Mammary epithelial cell (primary cell): ENCODE measurements at regions of chr2 and their contacts with region 1.

Region 1: GRCh38 chr2:65382776-65383357 is 49.5 kb downstream of the SPRED2 start:
- DNase-seq: peak; percentile 99
- H3K4me3 ChIP-seq: no peak overlapping the region
- H3K27ac ChIP-seq: peak overlapping the region; percentile 85
- H3K4me1 ChIP-seq: peaks cover 84% of the 10 kb centered on the region
- H3K27me3 ChIP-seq: no peaks in the 10 kb centered on the region
- CTCF ChIP-seq: peak; percentile 32 to 63

Region 2: GRCh38 chr2:65320042-65320725 is 62.7 kb before region 1 on chr2:
- CTCF ChIA-PET with region 1: no interaction called
- dilution Hi-C with region 1: no loop called
- in situ Hi-C with region 1: no loop called
- intact Hi-C with region 1: loop called (anchors 1 kb)
- DNase-seq: peak; percentile 94
- H3K4me3 ChIP-seq: no peak overlapping the region
- H3K27ac ChIP-seq: peak overlapping the region; percentile 77
- H3K4me1 ChIP-seq: peaks cover 58% of the 10 kb centered on the region
- H3K27me3 ChIP-seq: no peaks in the 10 kb centered on the region
- CTCF ChIP-seq: peak; percentile 45 to 54

Region 3: GRCh38 chr2:65366595-65367125 is 16.2 kb before region 1 on chr2:
- CTCF ChIA-PET with region 1: interaction called, 3 read pairs
- dilution Hi-C with region 1: no loop called
- in situ Hi-C with region 1: no loop called
- intact Hi-C with region 1: loop called (anchors 1 kb)
- DNase-seq: peak; percentile 98
- H3K4me3 ChIP-seq: peak overlapping the region; percentile 28 to 51 (median 30)
- H3K27ac ChIP-seq: peak overlapping the region; percentile 92
- H3K4me1 ChIP-seq: peaks cover 49% of the 10 kb centered on the region
- H3K27me3 ChIP-seq: no peaks in the 10 kb centered on the region
- CTCF ChIP-seq: no peak

Region 4: DNA sequence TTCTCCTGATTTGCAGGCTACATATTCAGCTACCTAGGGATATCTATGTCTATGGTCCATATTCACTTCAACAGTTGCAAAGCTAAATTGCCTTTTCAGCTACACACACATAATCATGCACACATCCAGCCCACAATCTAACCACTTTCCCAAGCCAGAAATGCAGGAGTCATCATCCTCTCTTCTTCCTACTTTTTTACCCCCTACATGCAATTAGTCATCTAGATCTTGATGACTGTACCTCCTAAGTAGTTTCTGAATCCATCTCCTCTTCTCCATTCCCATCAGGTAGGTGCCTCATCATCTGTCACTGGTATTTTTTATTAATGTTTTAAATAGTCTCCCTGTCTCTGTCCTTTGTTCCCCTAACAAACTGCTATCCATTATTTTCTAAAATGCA is 73.2 kb after region 1 on chr2:
- CTCF ChIA-PET with region 1: no interaction called
- dilution Hi-C with region 1: no loop called
- in situ Hi-C with region 1: no loop called
- intact Hi-C with region 1: no loop called
- DNase-seq: peak; percentile 92
- H3K4me3 ChIP-seq: no peak overlapping the region
- H3K27ac ChIP-seq: no peak overlapping the region
- H3K4me1 ChIP-seq: peaks cover 39% of the 10 kb centered on the region
- H3K27me3 ChIP-seq: no peaks in the 10 kb centered on the region
- CTCF ChIP-seq: no peak

Region 5: GRCh38 chr2:65554765-65555591 is 172.1 kb after region 1 on chr2:
- CTCF ChIA-PET with region 1: no interaction called
- dilution Hi-C with region 1: no loop called
- in situ Hi-C with region 1: no loop called
- intact Hi-C with region 1: loop called (anchors 1 kb)
- DNase-seq: peak; percentile 40
- H3K4me3 ChIP-seq: no peak overlapping the region
- H3K27ac ChIP-seq: no peak overlapping the region
- H3K4me1 ChIP-seq: peaks cover 6% of the 10 kb centered on the region
- H3K27me3 ChIP-seq: no peaks in the 10 kb centered on the region
- CTCF ChIP-seq: no peak